ENCODE measurements at regions of chr19 and their contacts with region 1.

Region 1: GRCh38 chr19:10142701-10143375 is 23.1 kb upstream of the EIF3G start:
- DNase-seq: peak; percentile 28 to 76 (median 53)
- ATAC-seq: peak; percentile 98 to 99
- H3K4me3 Mint-ChIP-seq: peak overlapping the region; percentile 71 to 90 (median 88)
- H3K27ac Mint-ChIP-seq: peak overlapping the region; percentile 97 to 100 (median 99)
- H3K4me1 Mint-ChIP-seq: peaks cover 8 to 64% (median 34%) of the 10 kb centered on the region in 4 donors
- H3K27me3 Mint-ChIP-seq: no peaks in the 10 kb centered on the region

Region 2: GRCh38 chr19:10095948-10096621 is 46.8 kb before region 1 on chr19:
- POLR2A ChIA-PET with region 1: interaction called, 37 read pairs
- DNase-seq: peak; percentile 84 to 96 (median 90)
- ATAC-seq: peak; percentile 89 to 90
- H3K4me3 Mint-ChIP-seq: peak overlapping the region; percentile 54 to 74 (median 69)
- H3K27ac Mint-ChIP-seq: peak overlapping the region in 9 of 10 donors; percentile 49 to 87 (median 79)
- H3K4me1 Mint-ChIP-seq: peaks cover 22 to 40% (median 35%) of the 10 kb centered on the region in 4 donors
- H3K27me3 Mint-ChIP-seq: no peaks in the 10 kb centered on the region

Region 3: GRCh38 chr19:10106100-10106936 is 36.5 kb before region 1 on chr19 and contains the start of gene PPAN:
- POLR2A ChIA-PET with region 1: interaction called, 18 read pairs
- DNase-seq: peak; percentile 91 to 99 (median 97)
- ATAC-seq: peak; percentile 64 to 66
- H3K4me3 Mint-ChIP-seq: peak within 1 kb of the TSS; percentile 75 to 93 (median 86)
- H3K27ac Mint-ChIP-seq: peak within 1 kb of the TSS; percentile 95 to 100 (median 98)
- H3K4me1 Mint-ChIP-seq: peaks cover 23 to 69% (median 61%) of the 10 kb centered on the region in 4 donors
- H3K27me3 Mint-ChIP-seq: no peaks in the 10 kb centered on the region
- polyA plus RNA-seq, gene PPAN: 15.7 to 42.7 (median 25.8) TPM

Region 4: DNA sequence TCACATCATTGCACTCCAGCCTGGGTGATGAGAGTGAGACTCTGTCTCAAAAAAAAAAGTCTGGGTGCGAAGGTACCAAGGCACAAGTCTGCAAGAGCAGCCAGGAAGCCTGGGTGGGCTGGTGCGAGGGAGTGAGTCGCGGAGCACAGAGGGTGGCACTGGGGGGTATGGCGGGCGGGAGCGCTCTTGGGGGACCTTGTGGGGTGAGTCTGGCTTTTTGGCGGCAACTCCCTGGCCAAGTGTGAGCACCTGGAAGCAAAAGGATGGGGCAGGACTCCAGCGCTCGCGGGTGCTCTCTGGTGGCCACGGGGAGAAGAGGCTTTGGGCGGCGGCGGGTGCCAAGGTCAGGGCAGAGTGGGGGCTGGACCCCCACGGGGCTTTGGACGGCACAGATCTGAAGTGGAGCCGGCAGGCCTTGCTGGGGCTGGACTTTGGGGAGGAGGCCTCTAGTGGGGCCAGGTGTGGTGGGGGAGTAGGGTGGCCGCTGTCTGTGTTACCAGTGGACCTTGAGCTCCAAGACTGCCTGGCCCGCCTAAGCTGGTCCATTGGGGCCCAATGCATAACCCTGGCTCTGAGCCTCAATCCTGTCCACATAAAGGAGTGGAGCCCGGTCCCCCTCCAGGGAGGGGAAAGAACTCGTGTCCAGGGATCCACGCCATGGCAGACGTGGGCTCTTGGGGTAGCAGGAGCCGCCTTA is 29.8 kb before region 1 on chr19:
- POLR2A ChIA-PET with region 1: interaction called, 116 read pairs
- DNase-seq: peak in 9 of 10 donors; percentile 38 to 78 (median 57)
- ATAC-seq: peak; percentile 60 to 61
- H3K4me3 Mint-ChIP-seq: peak overlapping the region; percentile 41 to 87 (median 62)
- H3K27ac Mint-ChIP-seq: peak overlapping the region; percentile 75 to 97 (median 89)
- H3K4me1 Mint-ChIP-seq: peaks cover 19 to 58% (median 45%) of the 10 kb centered on the region in 4 donors
- H3K27me3 Mint-ChIP-seq: no peaks in the 10 kb centered on the region

Region 5: DNA sequence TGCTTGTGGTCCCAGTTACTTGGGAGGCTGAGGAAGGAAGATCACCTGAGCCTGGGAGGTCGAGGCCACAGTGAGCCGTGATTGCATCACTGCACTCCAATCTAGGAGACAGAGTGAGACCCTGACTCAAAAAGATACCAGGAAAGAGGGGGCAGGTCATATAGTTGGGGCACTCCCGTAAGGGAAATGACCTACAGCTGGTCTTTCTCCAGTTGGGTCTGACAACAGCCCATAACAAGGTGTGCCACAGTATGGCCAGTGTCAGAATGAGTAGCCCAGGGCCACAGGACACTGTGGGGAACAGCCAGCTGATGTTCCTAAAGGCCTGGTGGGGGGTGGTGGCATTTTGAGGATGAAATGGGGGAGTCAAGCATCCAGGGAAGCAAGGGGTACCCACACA is 41.1 kb after region 1 on chr19:
- POLR2A ChIA-PET with region 1: no interaction called
- DNase-seq: no peak
- ATAC-seq: no peak
- H3K4me3 Mint-ChIP-seq: peak overlapping the region in 1 of 10 donors; percentile 48
- H3K27ac Mint-ChIP-seq: peak overlapping the region in 4 of 10 donors; percentile 25 to 81 (median 76)
- H3K4me1 Mint-ChIP-seq: peaks cover 15 to 33% (median 18%) of the 10 kb centered on the region in 4 donors
- H3K27me3 Mint-ChIP-seq: no peaks in the 10 kb centered on the region

Region 6: GRCh38 chr19:10194500-10195289 is 51.9 kb after region 1 on chr19 and contains the start of gene DNMT1:
- POLR2A ChIA-PET with region 1: interaction called, 12 read pairs
- DNase-seq: peak; percentile 85 to 98 (median 93)
- ATAC-seq: peak; percentile 95
- H3K4me3 Mint-ChIP-seq: peak within 1 kb of the TSS; percentile 88 to 97 (median 94)
- H3K27ac Mint-ChIP-seq: peak within 1 kb of the TSS; percentile 67 to 95 (median 91)
- H3K4me1 Mint-ChIP-seq: peaks cover 7 to 45% (median 35%) of the 10 kb centered on the region in 4 donors
- H3K27me3 Mint-ChIP-seq: no peaks in the 10 kb centered on the region
- polyA plus RNA-seq, gene DNMT1: 93.7 to 146 (median 142) TPM

Region 7: GRCh38 chr19:10305139-10305806 is 162.4 kb after region 1 on chr19:
- POLR2A ChIA-PET with region 1: no interaction called
- DNase-seq: no peak
- ATAC-seq: no peak
- H3K4me3 Mint-ChIP-seq: no peak overlapping the region
- H3K27ac Mint-ChIP-seq: no peak overlapping the region
- H3K4me1 Mint-ChIP-seq: peaks cover 0 to 3% (median 0%) of the 10 kb centered on the region in 4 donors
- H3K27me3 Mint-ChIP-seq: peaks cover 0 to 6% (median 3%) of the 10 kb centered on the region in 5 donors

Region 8: GRCh38 chr19:10695401-10696398 is 552.9 kb after region 1 on chr19:
- POLR2A ChIA-PET with region 1: no interaction called
- DNase-seq: peak; percentile 80 to 92 (median 86)
- ATAC-seq: peak; percentile 92 to 96
- H3K4me3 Mint-ChIP-seq: peak overlapping the region; percentile 78 to 98 (median 88)
- H3K27ac Mint-ChIP-seq: peak overlapping the region in 9 of 10 donors; percentile 20 to 96 (median 71)
- H3K4me1 Mint-ChIP-seq: peaks cover 11 to 25% (median 18%) of the 10 kb centered on the region in 4 donors
- H3K27me3 Mint-ChIP-seq: peaks cover 0 to 3% (median 0%) of the 10 kb centered on the region in 5 donors